Adrenal gland (tissue), 19 donors: ENCODE measurements at regions of chr19 and their contacts with region 1.

Region 1: DNA sequence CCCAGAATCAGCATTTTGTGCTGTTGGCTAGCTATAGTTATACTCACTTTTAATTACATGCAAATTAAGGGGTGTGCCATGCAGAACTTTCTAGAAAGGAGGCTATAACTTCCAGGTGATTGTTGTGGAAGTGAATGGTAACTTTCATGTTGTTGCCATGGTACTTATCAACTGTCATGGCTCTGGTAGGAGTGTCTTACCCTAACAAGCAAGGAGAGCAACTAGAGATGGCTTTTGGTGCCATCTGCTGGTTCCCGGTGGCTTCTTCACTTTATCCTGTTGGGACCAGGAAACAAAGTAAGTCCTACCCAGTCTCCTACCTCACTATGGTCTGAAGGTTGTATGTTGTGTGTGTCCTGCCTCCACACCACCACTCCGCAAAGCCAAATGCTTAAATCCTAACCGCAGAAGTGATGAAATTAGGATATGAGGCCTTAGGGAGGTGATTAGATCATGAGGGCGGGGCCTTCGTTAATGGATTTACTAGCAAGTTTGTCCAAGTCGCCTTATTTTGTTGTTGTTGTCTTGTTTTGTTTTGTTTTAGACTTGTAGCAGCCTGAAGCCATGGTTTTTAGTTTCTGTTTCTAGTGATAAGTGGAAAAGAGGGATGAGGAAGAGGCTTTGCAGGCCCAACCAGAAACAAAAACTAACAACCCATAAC is 22.6 kb downstream of the FBXL12 start:
- DNase-seq: peak; percentile 80 to 96 (median 85)
- H3K4me3 ChIP-seq: no peak overlapping the region
- H3K27ac ChIP-seq: no peak overlapping the region
- H3K4me1 ChIP-seq: peaks cover 0 to 2% of the 10 kb centered on the region in 2 donors
- H3K27me3 ChIP-seq: no peaks in the 10 kb centered on the region
- CTCF ChIP-seq: peak in 5 of 6 experiments; percentile 76 to 94 (median 88)
- POLR2A ChIP-seq: no peak

Region 2: GRCh38 chr19:9140159-9140874 is 655.9 kb before region 1 on chr19 and contains the start of gene ZNF317:
- intact Hi-C with region 1: loop called in 1 of 2 experiments (anchors 10 kb)
- DNase-seq: peak; percentile 92 to 98 (median 94)
- H3K4me3 ChIP-seq: peak within 1 kb of the TSS; percentile 25 to 100 (median 84)
- H3K27ac ChIP-seq: peak within 1 kb of the TSS; percentile 71 to 92 (median 91)
- H3K4me1 ChIP-seq: peaks cover 0 to 22% of the 10 kb centered on the region in 2 donors
- H3K27me3 ChIP-seq: no peaks in the 10 kb centered on the region
- CTCF ChIP-seq: no peak
- POLR2A ChIP-seq: peak; percentile 10 to 68
- total RNA-seq, gene ZNF317: 18.3 to 32.9 (median 28.0) TPM

Region 3: DNA sequence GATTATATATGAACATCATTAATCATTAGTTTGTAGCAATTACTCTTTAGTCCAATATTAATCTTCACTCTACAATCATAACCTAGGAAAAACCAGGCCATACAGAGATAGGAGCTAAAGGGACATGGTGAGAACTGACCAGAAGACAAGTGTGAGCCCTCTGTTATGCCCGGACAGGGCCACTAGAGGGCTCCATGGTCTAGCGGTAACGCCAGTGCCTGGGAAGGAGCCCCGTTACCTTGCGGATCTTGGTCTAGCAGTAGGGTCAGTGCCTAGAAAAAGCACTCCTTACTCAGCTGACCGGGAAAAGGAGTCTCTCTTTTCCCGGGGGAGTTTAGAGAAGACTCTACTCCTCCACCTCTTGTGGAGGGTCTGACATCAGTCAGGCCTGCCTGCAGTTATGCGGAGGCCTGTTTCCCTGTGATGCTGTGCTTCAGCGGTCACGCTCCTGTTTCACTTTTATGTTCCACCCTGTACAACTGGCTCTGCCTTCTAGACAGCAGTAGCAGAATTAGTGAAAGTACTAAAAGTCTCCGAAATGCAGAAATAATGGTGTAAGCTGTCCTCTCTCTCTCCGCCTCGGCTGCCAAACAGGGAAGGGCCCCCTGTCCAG is 590.6 kb before region 1 on chr19:
- intact Hi-C with region 1: loop called in 1 of 2 experiments (anchors 5 kb)
- DNase-seq: peak; percentile 59 to 86 (median 75)
- H3K4me3 ChIP-seq: peak overlapping the region in 2 of 4 donors; percentile 19 to 53
- H3K27ac ChIP-seq: no peak overlapping the region
- H3K4me1 ChIP-seq: no peaks in the 10 kb centered on the region
- H3K27me3 ChIP-seq: no peaks in the 10 kb centered on the region
- CTCF ChIP-seq: peak; percentile 71 to 87 (median 82)
- POLR2A ChIP-seq: no peak

Region 4: GRCh38 chr19:9309139-9309973 is 486.9 kb before region 1 on chr19 and contains the start of gene ZNF699:
- intact Hi-C with region 1: loop called in 1 of 2 experiments (anchors 10 kb)
- DNase-seq: peak; percentile 96 to 99 (median 99)
- H3K4me3 ChIP-seq: peak within 1 kb of the TSS; percentile 12 to 95 (median 90)
- H3K27ac ChIP-seq: peak within 1 kb of the TSS; percentile 57 to 99 (median 95)
- H3K4me1 ChIP-seq: peaks cover 7 to 13% of the 10 kb centered on the region in 2 donors
- H3K27me3 ChIP-seq: no peaks in the 10 kb centered on the region
- CTCF ChIP-seq: no peak
- POLR2A ChIP-seq: peak; percentile 74 to 86
- total RNA-seq, gene ZNF699: 2.4 to 10.4 (median 6.5) TPM

Region 5: DNA sequence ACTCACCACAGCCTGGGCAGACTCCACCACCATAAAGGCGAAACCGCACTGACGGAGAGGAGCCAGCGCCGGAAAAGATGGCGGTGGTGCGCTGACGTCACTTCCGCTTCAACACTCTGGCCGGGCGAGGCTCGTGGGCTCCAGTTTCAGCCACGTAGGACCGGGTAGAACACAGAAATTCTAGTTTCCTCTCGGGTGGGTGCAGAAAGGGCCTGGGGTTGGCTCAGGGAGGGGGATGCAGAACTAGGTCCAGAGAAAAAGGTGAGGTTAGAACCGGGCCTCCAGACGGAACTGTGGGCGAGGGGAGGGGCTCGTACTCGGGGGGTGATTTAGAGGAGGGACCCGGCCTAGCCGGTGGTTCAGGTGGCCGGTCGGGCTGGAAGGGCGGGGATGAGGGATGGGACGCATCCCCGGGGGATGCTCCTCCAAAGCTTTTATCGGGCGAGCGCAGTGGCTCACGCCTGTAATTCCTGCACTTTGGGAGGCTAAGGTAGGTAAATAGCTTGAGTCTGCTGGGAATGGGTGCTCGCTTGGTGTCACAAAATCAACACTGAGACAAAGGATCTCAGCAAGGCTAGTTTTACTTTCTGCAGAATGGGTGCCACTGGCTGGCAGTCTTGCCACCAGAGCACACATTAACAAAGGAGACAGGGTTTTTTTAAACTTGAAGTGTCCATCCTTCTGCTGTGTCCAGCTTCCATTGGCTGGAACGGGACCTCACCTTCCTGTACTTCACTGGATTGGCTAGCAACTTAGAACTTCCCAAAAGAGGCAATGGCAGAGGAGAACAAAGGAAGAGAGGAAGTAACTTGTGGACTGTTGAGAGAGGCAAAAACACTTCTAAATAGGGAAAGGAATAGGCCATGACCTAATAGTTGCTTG is 174.8 kb before region 1 on chr19 and contains the start of gene ZNF561:
- intact Hi-C with region 1: loop called (anchors 5 kb)
- DNase-seq: peak; percentile 78 to 92 (median 85)
- H3K4me3 ChIP-seq: peak within 1 kb of the TSS; percentile 44 to 91 (median 79)
- H3K27ac ChIP-seq: peak within 1 kb of the TSS; percentile 85 to 95 (median 92)
- H3K4me1 ChIP-seq: peaks cover 9 to 24% of the 10 kb centered on the region in 2 donors
- H3K27me3 ChIP-seq: no peaks in the 10 kb centered on the region
- CTCF ChIP-seq: peak in 1 of 6 experiments; percentile 9
- POLR2A ChIP-seq: peak in 1 of 2 donors; percentile 38
- total RNA-seq, gene ZNF561: 17.8 to 57.9 (median 34.6) TPM

Region 6: DNA sequence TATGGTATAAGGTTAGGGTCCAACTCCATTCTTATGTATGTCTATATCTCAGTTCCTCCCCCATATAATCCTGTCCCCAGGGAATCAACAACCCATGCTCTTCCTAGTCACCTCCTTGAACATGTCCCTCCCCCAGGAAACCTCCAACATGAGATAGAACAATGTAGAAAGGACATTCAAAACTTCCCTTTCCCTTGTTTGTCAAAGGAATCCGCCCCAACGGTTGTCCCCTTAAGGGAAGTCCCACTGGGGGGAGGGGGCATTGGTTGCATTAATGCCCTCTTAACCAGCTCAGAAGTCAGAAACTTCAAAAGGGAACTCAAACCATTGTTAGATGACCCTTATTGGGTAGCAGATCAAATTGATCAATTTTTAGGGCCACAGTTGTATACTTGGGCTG is 168.4 kb before region 1 on chr19:
- intact Hi-C with region 1: loop called (anchors 5 kb)
- DNase-seq: peak in 1 of 7 donors; percentile 15
- H3K4me3 ChIP-seq: no peak overlapping the region
- H3K27ac ChIP-seq: no peak overlapping the region
- H3K4me1 ChIP-seq: peaks cover 0 to under 1% of the 10 kb centered on the region in 2 donors
- H3K27me3 ChIP-seq: no peaks in the 10 kb centered on the region
- CTCF ChIP-seq: no peak
- POLR2A ChIP-seq: no peak

Region 7: GRCh38 chr19:9757544-9758501 is 38.4 kb before region 1 on chr19:
- intact Hi-C with region 1: no loop called
- DNase-seq: no peak
- H3K4me3 ChIP-seq: no peak overlapping the region
- H3K27ac ChIP-seq: no peak overlapping the region
- H3K4me1 ChIP-seq: no peaks in the 10 kb centered on the region
- H3K27me3 ChIP-seq: no peaks in the 10 kb centered on the region
- CTCF ChIP-seq: no peak
- POLR2A ChIP-seq: no peak

Region 8: GRCh38 chr19:9847087-9847671 is 50.9 kb after region 1 on chr19:
- intact Hi-C with region 1: loop called in 1 of 2 experiments (anchors 5 kb)
- DNase-seq: peak; percentile 86 to 96 (median 95)
- H3K4me3 ChIP-seq: no peak overlapping the region
- H3K27ac ChIP-seq: peak overlapping the region in 4 of 5 donors; percentile 69 to 91 (median 85)
- H3K4me1 ChIP-seq: peaks cover 20 to 24% of the 10 kb centered on the region in 2 donors
- H3K27me3 ChIP-seq: no peaks in the 10 kb centered on the region
- CTCF ChIP-seq: peak; percentile 52 to 86 (median 76)
- POLR2A ChIP-seq: no peak